ENCODE measurements at regions of chr16 and their contacts with region 1.

Region 1: GRCh38 chr16:87636072-87636684 is 33.9 kb downstream of the JPH3 start:
- DNase-seq: peak; percentile 91
- H3K4me3 Mint-ChIP-seq: peak overlapping the region; percentile 67
- H3K27ac Mint-ChIP-seq: no peak overlapping the region
- H3K4me1 Mint-ChIP-seq: no peaks in the 10 kb centered on the region
- H3K27me3 Mint-ChIP-seq: peaks cover 79% of the 10 kb centered on the region
- CTCF ChIP-seq: peak; percentile 74

Region 2: DNA sequence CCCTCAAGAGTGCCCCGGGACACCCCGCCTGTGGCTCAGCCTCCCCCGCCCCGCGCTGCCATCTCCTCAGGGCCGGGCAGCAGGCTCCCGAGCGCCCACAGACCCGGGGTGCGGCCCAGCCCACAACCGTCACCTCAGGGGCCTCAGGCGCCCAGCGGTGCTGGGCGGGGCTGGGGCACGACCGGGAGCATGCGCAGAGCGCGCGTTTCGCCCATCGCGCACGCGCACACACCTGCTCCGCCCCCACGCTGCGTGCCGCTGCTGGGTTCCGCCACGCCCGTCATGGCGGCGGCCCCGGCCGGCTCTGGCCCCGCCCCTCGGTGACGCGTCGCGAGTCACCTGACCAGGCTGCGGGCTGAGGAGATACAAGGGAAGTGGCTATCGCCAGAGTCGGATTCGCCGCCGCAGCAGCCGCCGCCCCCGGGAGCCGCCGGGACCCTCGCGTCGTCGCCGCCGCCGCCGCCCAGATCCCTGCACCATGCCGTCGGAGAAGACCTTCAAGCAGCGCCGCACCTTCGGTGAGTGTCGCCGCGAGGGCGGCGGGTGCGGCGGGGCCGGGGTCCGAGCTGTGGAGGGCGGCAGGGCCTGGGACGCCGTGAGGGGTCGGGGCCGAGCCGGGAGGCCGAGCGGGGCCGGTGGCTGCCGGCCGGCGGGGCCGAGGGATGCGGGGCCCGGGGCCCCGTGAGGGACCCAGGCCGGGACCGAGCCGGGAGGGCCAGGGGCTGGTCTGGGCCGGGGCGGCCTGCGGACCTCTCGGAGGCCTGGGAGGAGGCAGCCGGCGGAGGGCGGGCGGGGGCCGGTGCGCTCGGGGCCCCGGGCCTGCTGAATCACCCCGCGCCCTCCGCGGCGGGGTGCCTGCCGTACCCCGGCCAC is 244.0 kb before region 1 on chr16 and contains the start of gene MAP1LC3B:
- CTCF ChIA-PET with region 1: interaction called, 6 read pairs
- intact Hi-C with region 1: loop called (anchors 1 kb)
- DNase-seq: peak; percentile 100
- H3K4me3 Mint-ChIP-seq: peak within 1 kb of the TSS; percentile 87
- H3K27ac Mint-ChIP-seq: peak within 1 kb of the TSS; percentile 87
- H3K4me1 Mint-ChIP-seq: peaks cover 42% of the 10 kb centered on the region
- H3K27me3 Mint-ChIP-seq: no peaks in the 10 kb centered on the region
- CTCF ChIP-seq: no peak
- total RNA-seq, gene MAP1LC3B: 70.3 and 71.5 TPM in 2 replicates

Region 3: DNA sequence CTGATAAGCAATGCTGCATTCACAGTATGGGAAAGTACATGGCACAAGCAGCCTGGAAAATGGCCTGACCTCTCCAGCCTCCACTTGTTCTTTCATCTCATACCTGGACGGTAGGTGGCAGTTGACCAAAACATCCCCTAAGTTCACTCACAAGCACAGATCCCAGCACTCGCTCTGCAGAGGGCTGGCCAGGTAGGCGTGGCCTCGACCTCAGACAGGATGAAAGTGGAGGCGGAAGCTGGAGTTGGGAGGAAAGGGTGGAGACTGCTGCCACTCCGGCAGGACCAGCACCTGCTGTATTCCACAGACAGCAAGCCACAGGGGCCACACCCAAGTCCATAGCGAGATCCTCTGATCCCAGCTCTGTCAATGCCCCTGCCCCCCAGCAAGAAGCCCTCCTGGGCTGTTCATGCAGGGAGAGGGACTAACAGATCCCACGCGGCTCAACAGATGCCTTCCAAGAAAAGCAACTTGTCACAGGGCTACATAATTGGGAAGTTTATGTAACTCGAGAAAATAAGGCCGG is 174.6 kb before region 1 on chr16:
- CTCF ChIA-PET with region 1: interaction called, 11 read pairs
- intact Hi-C with region 1: loop called (anchors 2 kb)
- DNase-seq: peak; percentile 97
- H3K4me3 Mint-ChIP-seq: peak overlapping the region; percentile 34
- H3K27ac Mint-ChIP-seq: no peak overlapping the region
- H3K4me1 Mint-ChIP-seq: peaks cover 61% of the 10 kb centered on the region
- H3K27me3 Mint-ChIP-seq: no peaks in the 10 kb centered on the region
- CTCF ChIP-seq: peak; percentile 58

Region 4: GRCh38 chr16:87571136-87571867 is 64.9 kb before region 1 on chr16:
- CTCF ChIA-PET with region 1: interaction called, 22 read pairs
- intact Hi-C with region 1: no loop called
- DNase-seq: peak; percentile 80
- H3K4me3 Mint-ChIP-seq: no peak overlapping the region
- H3K27ac Mint-ChIP-seq: no peak overlapping the region
- H3K4me1 Mint-ChIP-seq: peaks cover 11% of the 10 kb centered on the region
- H3K27me3 Mint-ChIP-seq: peaks cover 78% of the 10 kb centered on the region
- CTCF ChIP-seq: no peak

Region 5: DNA sequence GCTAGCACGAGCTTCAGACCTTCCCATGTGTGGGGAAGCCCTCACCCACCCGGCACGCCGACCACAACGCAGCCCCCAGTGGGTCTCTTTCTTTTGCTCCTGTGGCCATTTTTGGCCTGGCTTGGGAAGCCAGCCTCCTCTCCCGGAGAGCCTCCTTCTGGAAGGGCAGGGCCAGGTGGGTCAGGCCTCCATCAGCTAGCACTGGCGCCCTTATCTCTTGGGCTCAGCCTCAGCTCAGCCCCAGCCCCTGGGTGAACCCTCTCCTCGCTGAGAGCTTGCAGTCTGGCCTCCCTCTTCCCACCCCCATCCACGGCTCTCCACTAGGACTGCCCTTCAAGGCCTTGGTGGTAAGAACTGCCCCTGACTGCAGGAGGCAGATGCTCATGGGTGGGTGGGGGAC is 48.5 kb before region 1 on chr16:
- CTCF ChIA-PET with region 1: interaction called, 57 read pairs
- intact Hi-C with region 1: loop called (anchors 1 kb)
- DNase-seq: no peak
- H3K4me3 Mint-ChIP-seq: no peak overlapping the region
- H3K27ac Mint-ChIP-seq: no peak overlapping the region
- H3K4me1 Mint-ChIP-seq: peaks cover 12% of the 10 kb centered on the region
- H3K27me3 Mint-ChIP-seq: peaks cover 95% of the 10 kb centered on the region
- CTCF ChIP-seq: no peak

Region 6: DNA sequence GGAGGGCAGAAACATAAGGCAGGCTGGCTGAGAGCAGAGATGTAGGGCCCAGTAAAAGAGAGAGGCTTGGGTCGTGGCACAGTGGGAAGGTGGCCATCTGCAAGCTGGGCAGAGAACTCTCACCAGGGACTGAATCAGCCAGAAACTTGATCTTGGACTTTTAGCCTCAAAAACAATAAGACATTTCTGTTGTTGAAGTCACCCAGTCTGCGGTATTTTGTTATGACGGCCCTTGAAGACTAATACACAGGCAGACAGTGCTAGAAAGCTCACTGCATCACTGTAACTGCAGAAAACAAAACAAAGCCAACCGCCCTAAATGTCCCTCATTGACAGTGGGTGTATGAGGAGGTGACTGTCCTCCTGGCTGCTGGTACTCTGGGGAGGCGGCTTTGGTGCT is 37.7 kb before region 1 on chr16:
- CTCF ChIA-PET with region 1: no interaction called
- intact Hi-C with region 1: no loop called
- DNase-seq: no peak
- H3K4me3 Mint-ChIP-seq: no peak overlapping the region
- H3K27ac Mint-ChIP-seq: no peak overlapping the region
- H3K4me1 Mint-ChIP-seq: peaks cover 6% of the 10 kb centered on the region
- H3K27me3 Mint-ChIP-seq: peaks cover 9% of the 10 kb centered on the region
- CTCF ChIP-seq: no peak

Region 7: DNA sequence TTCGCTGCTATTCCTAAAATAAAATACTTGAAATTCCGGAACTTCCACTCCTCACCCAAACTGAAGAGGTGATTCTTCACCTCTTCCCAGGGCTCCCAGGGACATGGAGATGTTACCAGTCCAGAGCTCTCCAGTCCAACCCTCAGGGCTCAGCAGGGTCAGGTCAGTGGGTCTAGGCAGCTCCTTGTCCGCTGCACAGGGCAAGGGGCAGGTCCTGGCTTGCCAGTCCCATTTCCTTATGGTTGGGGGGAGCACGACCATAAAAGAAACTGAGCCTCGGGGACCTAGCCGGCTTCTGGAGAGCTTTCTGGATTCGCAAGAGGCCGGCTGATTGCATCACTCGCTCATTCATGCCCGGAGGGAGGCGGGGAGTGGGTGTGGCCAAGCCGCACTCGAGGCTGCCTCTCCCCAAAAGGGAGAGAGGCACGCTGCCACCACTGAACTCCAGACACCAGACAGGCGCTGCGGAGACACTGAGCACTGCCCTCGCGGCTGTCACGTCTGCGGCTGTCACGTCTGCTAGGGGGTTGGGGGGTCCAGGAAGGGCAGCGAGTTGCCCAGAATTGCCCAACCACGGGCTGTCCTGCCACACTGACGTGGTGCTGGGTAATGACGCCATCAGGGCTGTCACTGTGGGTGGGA is 217.4 kb after region 1 on chr16:
- CTCF ChIA-PET with region 1: no interaction called
- intact Hi-C with region 1: no loop called
- DNase-seq: peak; percentile 97
- H3K4me3 Mint-ChIP-seq: peak overlapping the region; percentile 54
- H3K27ac Mint-ChIP-seq: peak overlapping the region; percentile 89
- H3K4me1 Mint-ChIP-seq: peaks cover 79% of the 10 kb centered on the region
- H3K27me3 Mint-ChIP-seq: no peaks in the 10 kb centered on the region
- CTCF ChIP-seq: no peak